T-cell (primary cell): ENCODE measurements at regions of chr12 and their contacts with region 1.

Region 1: DNA sequence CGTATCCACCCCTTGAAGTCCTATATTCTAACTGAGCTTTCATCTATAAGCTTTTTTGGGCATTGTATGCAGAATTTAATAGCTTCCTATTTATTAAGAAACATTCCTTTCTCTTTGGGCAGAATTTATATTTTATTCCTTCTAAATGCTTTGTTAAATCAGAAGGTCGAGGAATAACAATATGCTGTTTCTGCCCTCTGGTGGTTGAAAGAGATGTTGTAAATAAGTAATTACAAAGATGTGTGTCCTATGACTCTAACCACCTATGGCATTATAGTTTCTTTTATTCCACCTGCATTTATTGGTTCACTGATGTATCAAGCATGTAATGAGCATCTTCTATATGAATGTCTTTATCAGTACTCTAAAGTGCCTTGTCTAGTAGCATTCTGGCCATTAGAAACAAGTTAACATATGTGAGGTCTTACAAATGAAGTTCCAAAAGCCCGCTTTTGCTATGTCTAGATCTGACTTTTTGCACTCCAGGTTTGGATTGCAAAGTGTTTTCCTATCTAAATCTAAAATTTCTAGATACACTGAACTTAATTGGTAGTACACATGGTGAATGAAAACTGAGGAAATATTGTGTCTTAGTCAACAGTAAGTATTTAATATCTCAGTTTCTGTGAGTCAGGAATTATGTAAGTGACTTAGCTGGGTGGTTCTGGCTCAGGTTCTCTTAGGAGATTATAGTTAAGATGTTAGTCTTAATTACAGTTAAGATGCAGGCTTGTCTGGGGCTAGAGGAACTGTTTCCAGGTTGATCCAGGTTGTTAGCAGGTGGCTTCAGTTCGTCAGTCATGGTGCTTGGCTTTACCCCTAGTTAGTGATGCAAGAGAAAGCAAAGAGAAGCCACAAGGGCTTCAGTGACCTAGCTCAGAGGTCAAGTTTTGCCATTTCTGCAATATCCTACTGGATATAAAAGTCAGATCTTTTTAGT is 57.5 kb downstream of the PLEKHA5 start:
- DNase-seq: peak in 1 of 35 experiments; percentile 52
- ATAC-seq: no peak
- H3K4me3 ChIP-seq: no peak overlapping the region
- H3K4me3 Mint-ChIP-seq: no peak overlapping the region
- H3K27ac ChIP-seq: no peak overlapping the region
- H3K27ac Mint-ChIP-seq: no peak overlapping the region
- H3K4me1 ChIP-seq: no peaks in the 10 kb centered on the region
- H3K4me1 Mint-ChIP-seq: peaks cover 0 to 2% (median 0%) of the 10 kb centered on the region in 3 donors
- H3K27me3 ChIP-seq: no peaks in the 10 kb centered on the region
- H3K27me3 Mint-ChIP-seq: peaks cover 0 to 4% of the 10 kb centered on the region in 2 donors

Region 2: GRCh38 chr12:18861287-18861858 is 325.6 kb before region 1 on chr12:
- CTCF ChIA-PET with region 1: interaction called, 7 to 26 read pairs
- POLR2A ChIA-PET with region 1: no interaction called
- DNase-seq: peak in 1 of 35 experiments; percentile 27
- ATAC-seq: no peak
- H3K4me3 ChIP-seq: no peak overlapping the region
- H3K4me3 Mint-ChIP-seq: no peak overlapping the region
- H3K27ac ChIP-seq: no peak overlapping the region
- H3K27ac Mint-ChIP-seq: no peak overlapping the region
- H3K4me1 ChIP-seq: no peaks in the 10 kb centered on the region
- H3K4me1 Mint-ChIP-seq: no peaks in the 10 kb centered on the region
- H3K27me3 ChIP-seq: no peaks in the 10 kb centered on the region
- H3K27me3 Mint-ChIP-seq: peaks cover 2 to 12% of the 10 kb centered on the region in 2 donors

Region 3: GRCh38 chr12:19248929-19249602 is 62.1 kb after region 1 on chr12:
- CTCF ChIA-PET with region 1: no interaction called
- POLR2A ChIA-PET with region 1: no interaction called
- DNase-seq: no peak
- ATAC-seq: no peak
- H3K4me3 ChIP-seq: no peak overlapping the region
- H3K4me3 Mint-ChIP-seq: no peak overlapping the region
- H3K27ac ChIP-seq: no peak overlapping the region
- H3K27ac Mint-ChIP-seq: no peak overlapping the region
- H3K4me1 ChIP-seq: peaks cover 0 to 13% of the 10 kb centered on the region in 2 experiments
- H3K4me1 Mint-ChIP-seq: no peaks in the 10 kb centered on the region
- H3K27me3 ChIP-seq: no peaks in the 10 kb centered on the region
- H3K27me3 Mint-ChIP-seq: no peaks in the 10 kb centered on the region

Region 4: DNA sequence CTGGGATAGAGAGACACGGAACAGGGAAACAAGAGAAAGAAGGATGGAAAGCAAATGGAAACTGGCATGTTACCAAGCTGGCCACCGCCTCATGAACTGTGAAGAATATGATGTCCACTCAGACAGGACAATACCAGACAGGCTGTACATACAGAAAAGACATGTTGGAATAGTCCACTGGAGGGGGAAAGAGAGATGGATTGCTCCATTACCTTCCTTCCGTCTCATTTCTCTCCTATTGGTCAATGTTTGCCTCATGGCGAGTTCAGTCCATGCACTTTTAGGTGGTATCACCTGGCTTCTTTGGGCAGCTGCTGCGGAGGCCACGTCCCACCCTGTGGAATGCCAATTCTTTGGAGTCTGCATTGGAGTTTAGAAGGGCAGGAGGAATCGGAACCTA is 418.7 kb after region 1 on chr12:
- CTCF ChIA-PET with region 1: no interaction called
- POLR2A ChIA-PET with region 1: no interaction called
- DNase-seq: no peak
- ATAC-seq: no peak
- H3K4me3 ChIP-seq: no peak overlapping the region
- H3K4me3 Mint-ChIP-seq: no peak overlapping the region
- H3K27ac ChIP-seq: no peak overlapping the region
- H3K27ac Mint-ChIP-seq: no peak overlapping the region
- H3K4me1 ChIP-seq: no peaks in the 10 kb centered on the region
- H3K4me1 Mint-ChIP-seq: no peaks in the 10 kb centered on the region
- H3K27me3 ChIP-seq: no peaks in the 10 kb centered on the region
- H3K27me3 Mint-ChIP-seq: no peaks in the 10 kb centered on the region